H1 (cell line): ENCODE measurements at regions of chr15 and their contacts with region 1.

Region 1: GRCh38 chr15:86231864-86232721 is 152.4 kb downstream of the AGBL1 start:
- DNase-seq: peak in 1 of 2 experiments; percentile 66
- H3K4me3 ChIP-seq: peak overlapping the region in 1 of 4 experiments; percentile 45; a peak in 3 of 8 replicates
- H3K27ac ChIP-seq: no peak overlapping the region
- H3K4me1 ChIP-seq: peaks cover 8 to 14% (median 11%) of the 10 kb centered on the region in 4 experiments
- H3K27me3 ChIP-seq: no peaks in the 10 kb centered on the region; a peak in 1 of 7 replicates
- CTCF ChIP-seq: peak; percentile 58 to 74 (median 69)
- EP300 ChIP-seq: peak in 1 of 2 experiments; percentile 22; a peak in 1 of 3 replicates
- POLR2A ChIP-seq: no peak
- RAD21 ChIP-seq: peak; percentile 85 to 89

Region 2: GRCh38 chr15:85865070-85865684 is 366.9 kb before region 1 on chr15:
- CTCF ChIA-PET with region 1: interaction called, 16 read pairs
- POLR2A ChIA-PET with region 1: no interaction called
- DNase-seq: peak; percentile 66 to 79
- H3K4me3 ChIP-seq: no peak overlapping the region
- H3K27ac ChIP-seq: no peak overlapping the region
- H3K4me1 ChIP-seq: peaks cover 0 to 7% (median 0%) of the 10 kb centered on the region in 4 experiments; a peak in 1 of 7 replicates
- H3K27me3 ChIP-seq: no peaks in the 10 kb centered on the region
- CTCF ChIP-seq: peak; percentile 84 to 93 (median 91)
- EP300 ChIP-seq: no peak
- POLR2A ChIP-seq: no peak
- RAD21 ChIP-seq: peak; percentile 98 to 100